IMR-90 (cell line): ENCODE measurements at regions of chr13 and their contacts with region 1.

Region 1: GRCh38 chr13:43107780-43108179 is 84.4 kb downstream of the DNAJC15 start:
- DNase-seq: peak; percentile 54
- ATAC-seq: peak; percentile 72
- H3K4me3 ChIP-seq: no peak overlapping the region
- H3K27ac ChIP-seq: no peak overlapping the region
- H3K4me1 ChIP-seq: peaks cover 3% of the 10 kb centered on the region; the same call in 1 of the 2 replicates
- H3K27me3 ChIP-seq: no peaks in the 10 kb centered on the region
- CTCF ChIP-seq: no peak
- POLR2A ChIP-seq: no peak
- RAD21 ChIP-seq: no peak

Region 2: DNA sequence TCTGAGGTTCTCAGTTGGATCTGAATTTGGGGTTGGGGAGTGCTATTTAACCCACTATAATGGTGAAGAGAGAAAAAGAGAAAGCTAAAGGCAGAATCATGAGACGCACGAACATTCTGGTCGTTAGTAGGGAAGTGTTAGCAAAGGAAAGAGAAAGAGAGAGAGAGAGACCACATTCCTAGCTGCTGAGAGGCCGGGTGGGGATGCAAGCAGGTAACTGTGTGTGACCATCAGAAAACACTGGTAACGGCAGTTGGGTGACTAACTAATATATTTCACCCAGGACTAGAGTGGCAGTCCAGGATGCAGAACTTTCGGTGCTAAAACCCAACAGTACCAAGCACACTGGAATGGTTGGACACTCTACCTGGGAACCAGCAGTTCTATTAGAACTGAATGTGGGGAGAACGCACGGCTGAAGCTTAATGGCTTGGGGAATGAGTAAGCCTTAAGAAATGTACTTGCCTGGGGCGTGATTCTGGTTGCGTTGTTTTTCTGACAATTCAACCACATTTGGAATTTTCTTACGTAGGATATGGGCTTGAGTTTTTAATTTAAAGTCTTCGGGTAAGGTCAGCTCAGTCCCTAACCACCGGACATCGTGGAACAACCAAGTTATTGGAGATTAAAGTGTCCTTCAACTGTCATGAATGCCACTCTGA is 45.8 kb after region 1 on chr13:
- CTCF ChIA-PET with region 1: no interaction called
- POLR2A ChIA-PET with region 1: no interaction called
- dilution Hi-C with region 1: no loop called
- in situ Hi-C with region 1: no loop called
- intact Hi-C with region 1: no loop called
- DNase-seq: peak; percentile 44
- ATAC-seq: no peak
- H3K4me3 ChIP-seq: no peak overlapping the region
- H3K27ac ChIP-seq: no peak overlapping the region
- H3K4me1 ChIP-seq: no peaks in the 10 kb centered on the region
- H3K27me3 ChIP-seq: peaks cover 3% of the 10 kb centered on the region; the same call in 1 of the 2 replicates
- CTCF ChIP-seq: no peak
- POLR2A ChIP-seq: no peak
- RAD21 ChIP-seq: no peak

Region 3: GRCh38 chr13:43273362-43273761 is 165.6 kb after region 1 on chr13:
- CTCF ChIA-PET with region 1: no interaction called
- POLR2A ChIA-PET with region 1: no interaction called
- dilution Hi-C with region 1: no loop called
- in situ Hi-C with region 1: no loop called
- intact Hi-C with region 1: loop called (anchors 5 kb)
- DNase-seq: peak; percentile 59
- ATAC-seq: no peak
- H3K4me3 ChIP-seq: no peak overlapping the region
- H3K27ac ChIP-seq: no peak overlapping the region
- H3K4me1 ChIP-seq: peaks cover 26% of the 10 kb centered on the region
- H3K27me3 ChIP-seq: no peaks in the 10 kb centered on the region
- CTCF ChIP-seq: no peak
- POLR2A ChIP-seq: no peak
- RAD21 ChIP-seq: no peak